Activated B cell treated with CpG ODN at 0.5 μM for 24 hours (primary cell): ENCODE measurements at regions of chr7 and their contacts with region 1.

Region 1: DNA sequence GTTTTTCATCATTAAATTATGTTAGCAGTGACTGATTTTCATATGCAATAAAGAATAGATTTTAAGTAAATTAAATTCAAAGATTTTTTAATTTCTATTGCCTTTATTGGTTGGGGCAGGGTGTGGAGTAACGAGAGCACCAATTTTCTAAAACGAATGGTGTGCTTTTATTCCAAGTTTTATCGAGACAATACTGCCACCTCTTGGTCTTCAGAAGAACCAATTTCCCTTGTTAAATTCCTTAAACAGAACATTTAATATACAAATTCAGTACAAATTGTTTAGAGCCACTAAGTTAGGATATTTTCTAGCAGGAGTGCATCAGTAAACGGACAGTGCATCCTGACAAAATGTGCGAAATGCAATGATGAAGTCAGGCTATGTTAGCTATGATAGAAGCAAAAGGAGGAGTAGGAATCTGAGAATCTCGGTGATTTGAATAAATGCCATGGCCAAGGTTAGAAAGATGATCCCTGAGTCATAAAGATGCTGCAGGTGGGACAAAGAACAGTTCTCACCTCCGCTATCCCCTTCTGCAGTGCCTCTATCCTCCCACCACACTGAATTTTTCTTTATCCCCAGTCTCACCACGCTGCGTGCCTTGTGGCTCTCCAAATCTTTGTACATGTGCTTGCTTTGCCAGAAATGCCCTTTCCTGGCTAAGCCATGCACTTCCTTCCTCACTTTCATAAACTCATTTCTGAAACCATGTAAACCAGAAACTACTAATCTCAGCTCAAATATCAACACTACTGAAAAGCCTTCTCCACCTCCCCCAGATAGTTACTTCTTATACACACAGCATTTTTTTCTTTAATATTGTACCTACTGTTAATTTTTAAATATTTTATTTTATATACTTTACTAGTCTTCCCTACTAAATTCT is 31.9 kb upstream of the AGBL3 start:
- DNase-seq: no peak
- ATAC-seq: no peak
- H3K4me3 Mint-ChIP-seq: no peak overlapping the region
- H3K27ac Mint-ChIP-seq: no peak overlapping the region
- H3K4me1 Mint-ChIP-seq: no peaks in the 10 kb centered on the region
- H3K27me3 Mint-ChIP-seq: no peaks in the 10 kb centered on the region
- CTCF ChIP-seq: no peak

Region 2: DNA sequence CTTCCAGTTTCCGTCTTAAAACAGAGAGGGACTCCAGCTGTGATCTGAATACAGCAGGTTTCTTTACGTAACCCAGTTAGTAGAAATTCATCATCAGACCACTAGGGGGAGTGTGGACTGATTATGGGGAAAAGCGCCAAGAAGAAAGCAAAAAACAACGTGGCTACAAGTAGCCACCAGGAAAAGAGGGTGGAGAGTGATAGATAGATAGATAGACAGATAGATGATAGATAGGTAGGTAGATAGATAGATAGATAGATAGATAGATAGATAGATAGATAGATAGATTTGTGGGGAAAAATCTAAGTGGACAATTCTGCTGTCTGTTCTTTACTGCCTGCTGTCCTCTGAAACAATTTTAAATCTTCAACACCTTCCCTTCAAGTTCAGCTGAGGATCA is 439.8 kb before region 1 on chr7:
- CTCF ChIA-PET with region 1: interaction called, 3 read pairs
- POLR2A ChIA-PET with region 1: no interaction called
- intact Hi-C with region 1: loop called (anchors 2 kb)
- DNase-seq: no peak
- ATAC-seq: peak; percentile 72
- H3K4me3 Mint-ChIP-seq: no peak overlapping the region
- H3K27ac Mint-ChIP-seq: no peak overlapping the region
- H3K4me1 Mint-ChIP-seq: peaks cover 2% of the 10 kb centered on the region
- H3K27me3 Mint-ChIP-seq: peaks cover 6% of the 10 kb centered on the region
- CTCF ChIP-seq: peak; percentile 98

Region 3: DNA sequence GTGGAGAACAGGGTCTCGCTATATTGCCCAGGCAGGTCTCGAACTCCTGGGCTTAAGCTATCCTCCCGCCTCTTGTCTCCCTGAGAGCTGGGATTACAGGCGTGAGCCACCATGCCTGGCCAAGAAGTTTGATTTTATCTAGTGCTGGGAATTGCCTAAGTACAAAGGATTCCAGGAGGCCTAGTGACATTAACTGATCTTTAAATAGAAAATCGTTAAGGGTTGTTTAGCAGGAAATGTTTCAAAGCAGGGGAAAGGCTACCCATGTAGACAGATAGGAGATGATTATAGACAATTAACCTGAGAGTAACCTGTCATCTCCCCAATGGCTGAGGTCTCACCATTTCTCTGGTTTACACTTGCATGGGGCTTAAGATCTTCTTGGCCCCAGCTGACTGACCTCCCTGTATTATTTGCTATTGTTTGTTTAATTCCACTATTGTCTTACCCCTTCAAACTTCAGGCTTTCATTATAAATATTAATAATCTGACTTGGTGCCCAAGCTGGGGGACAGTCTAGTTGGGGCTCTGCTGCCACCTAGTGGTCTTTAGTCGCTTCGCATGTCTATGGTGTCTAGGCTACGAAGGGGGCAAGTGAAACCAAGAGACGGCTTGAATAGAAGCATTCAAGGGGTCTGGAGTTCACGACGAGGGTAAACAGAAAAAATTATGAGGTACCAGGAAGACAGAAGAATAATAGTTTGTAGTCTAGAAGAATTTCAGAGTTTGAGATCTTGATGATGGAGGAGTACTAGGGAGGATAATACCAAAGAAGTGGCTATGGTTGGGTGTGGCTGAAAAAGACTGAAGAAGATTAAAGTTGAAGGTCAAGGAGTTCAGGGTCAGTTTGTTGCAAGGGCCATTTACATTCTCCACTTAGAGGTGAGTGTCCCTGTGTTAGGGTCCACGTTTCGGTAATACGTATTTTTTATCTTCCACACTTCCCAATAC is 348.2 kb before region 1 on chr7:
- CTCF ChIA-PET with region 1: no interaction called
- POLR2A ChIA-PET with region 1: no interaction called
- intact Hi-C with region 1: loop called (anchors 1 kb)
- DNase-seq: no peak
- ATAC-seq: peak; percentile 84
- H3K4me3 Mint-ChIP-seq: no peak overlapping the region
- H3K27ac Mint-ChIP-seq: no peak overlapping the region
- H3K4me1 Mint-ChIP-seq: peaks cover 2% of the 10 kb centered on the region
- H3K27me3 Mint-ChIP-seq: peaks cover 44% of the 10 kb centered on the region
- CTCF ChIP-seq: peak; percentile 78

Region 4: GRCh38 chr7:134686786-134687185 is 267.7 kb before region 1 on chr7:
- CTCF ChIA-PET with region 1: no interaction called
- POLR2A ChIA-PET with region 1: no interaction called
- intact Hi-C with region 1: loop called (anchors 1 kb)
- DNase-seq: no peak
- ATAC-seq: no peak
- H3K4me3 Mint-ChIP-seq: no peak overlapping the region
- H3K27ac Mint-ChIP-seq: no peak overlapping the region
- H3K4me1 Mint-ChIP-seq: no peaks in the 10 kb centered on the region
- H3K27me3 Mint-ChIP-seq: peaks cover 4% of the 10 kb centered on the region
- CTCF ChIP-seq: no peak